ENCODE measurements at regions of chr5 and their contacts with region 1.

Region 1: GRCh38 chr5:93192087-93192486 is 388.9 kb downstream of the NR2F1-AS1 start:
- DNase-seq: peak; percentile 76
- ATAC-seq: peak; percentile 96
- H3K4me3 ChIP-seq: no peak overlapping the region
- H3K27ac ChIP-seq: peak overlapping the region; percentile 83
- H3K4me1 ChIP-seq: peaks cover 22% of the 10 kb centered on the region
- H3K27me3 ChIP-seq: no peaks in the 10 kb centered on the region
- CTCF ChIP-seq: no peak

Region 2: GRCh38 chr5:93101661-93102060 is 90.4 kb before region 1 on chr5:
- CTCF ChIA-PET with region 1: no interaction called
- POLR2A ChIA-PET with region 1: interaction called, 10 read pairs
- in situ Hi-C with region 1: no loop called
- intact Hi-C with region 1: no loop called
- DNase-seq: no peak
- ATAC-seq: no peak
- H3K4me3 ChIP-seq: no peak overlapping the region
- H3K27ac ChIP-seq: peak overlapping the region; percentile 82
- H3K4me1 ChIP-seq: peaks cover 19% of the 10 kb centered on the region
- H3K27me3 ChIP-seq: no peaks in the 10 kb centered on the region
- CTCF ChIP-seq: no peak